Posterior cingulate gyrus (tissue), 11 donors: ENCODE measurements at regions of chr18 and their contacts with region 1.

Region 1: GRCh38 chr18:21841570-21841969 is 101.0 kb downstream of the MIB1 start:
- DNase-seq: no peak

Region 2: DNA sequence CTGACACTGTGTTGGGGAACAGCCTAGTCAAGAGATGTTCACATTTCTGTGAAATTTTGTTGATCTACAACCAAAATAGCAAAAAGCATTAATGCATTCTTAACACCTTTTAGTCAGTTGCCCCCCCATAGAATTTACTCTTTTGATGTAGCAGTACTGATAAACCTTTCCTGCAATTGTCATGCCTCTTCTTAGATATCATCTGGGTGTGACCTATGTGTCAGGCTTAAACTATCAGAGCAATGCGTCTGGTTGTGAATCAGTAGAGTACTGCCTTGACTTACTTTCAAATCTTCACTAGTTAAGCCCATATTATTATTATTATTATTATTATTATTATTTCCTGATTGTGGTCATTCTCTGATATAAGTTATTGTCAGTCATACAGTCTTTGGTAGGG is 537.7 kb before region 1 on chr18:
- intact Hi-C with region 1: no loop called
- DNase-seq: no peak

Region 3: GRCh38 chr18:21489919-21490495 is 351.6 kb before region 1 on chr18:
- intact Hi-C with region 1: loop called (anchors 10 kb)
- DNase-seq: no peak

Region 4: DNA sequence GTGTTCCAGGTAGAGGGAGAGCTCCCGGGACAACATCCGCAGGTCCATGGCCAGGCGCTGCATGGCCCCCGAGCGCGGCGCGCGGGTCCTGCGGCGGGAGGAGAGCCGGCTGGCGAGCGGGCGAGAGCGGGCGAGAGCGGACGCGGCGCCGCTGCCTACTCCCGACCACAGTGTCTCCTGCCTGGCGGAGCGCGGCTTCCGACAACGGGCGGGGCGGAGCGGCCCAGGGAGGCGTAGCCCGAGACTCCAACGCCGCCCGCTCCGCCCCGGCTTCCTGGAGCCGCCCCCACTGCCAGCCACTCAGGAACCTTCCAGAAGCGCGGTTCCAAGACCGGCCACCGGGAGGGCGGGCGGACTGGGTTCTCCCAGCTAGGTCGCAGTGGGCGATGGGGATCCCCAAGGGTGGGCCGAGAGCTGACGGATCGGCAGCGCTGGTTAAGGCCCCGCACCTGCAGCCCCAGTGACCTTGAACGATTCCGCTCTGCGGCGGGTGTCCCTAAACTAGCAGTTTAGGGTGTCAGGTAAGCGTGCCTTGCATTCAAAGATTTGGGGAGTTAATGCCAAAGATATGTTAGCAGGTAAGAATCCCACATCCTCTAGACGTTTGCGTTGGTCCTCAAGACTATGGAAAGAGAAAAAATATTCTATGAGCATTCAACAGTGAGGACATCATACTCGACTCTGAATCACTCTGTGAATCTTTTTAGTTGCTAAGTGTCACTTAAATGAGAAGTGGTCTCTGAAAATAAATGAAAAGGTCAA is 136.8 kb before region 1 on chr18 and contains the start of gene ABHD3:
- intact Hi-C with region 1: no loop called
- DNase-seq: peak; percentile 83 to 98 (median 90)